Gastrocnemius medialis (tissue), 4 donors: ENCODE measurements at regions of chr1 and their contacts with region 1.

Region 1: DNA sequence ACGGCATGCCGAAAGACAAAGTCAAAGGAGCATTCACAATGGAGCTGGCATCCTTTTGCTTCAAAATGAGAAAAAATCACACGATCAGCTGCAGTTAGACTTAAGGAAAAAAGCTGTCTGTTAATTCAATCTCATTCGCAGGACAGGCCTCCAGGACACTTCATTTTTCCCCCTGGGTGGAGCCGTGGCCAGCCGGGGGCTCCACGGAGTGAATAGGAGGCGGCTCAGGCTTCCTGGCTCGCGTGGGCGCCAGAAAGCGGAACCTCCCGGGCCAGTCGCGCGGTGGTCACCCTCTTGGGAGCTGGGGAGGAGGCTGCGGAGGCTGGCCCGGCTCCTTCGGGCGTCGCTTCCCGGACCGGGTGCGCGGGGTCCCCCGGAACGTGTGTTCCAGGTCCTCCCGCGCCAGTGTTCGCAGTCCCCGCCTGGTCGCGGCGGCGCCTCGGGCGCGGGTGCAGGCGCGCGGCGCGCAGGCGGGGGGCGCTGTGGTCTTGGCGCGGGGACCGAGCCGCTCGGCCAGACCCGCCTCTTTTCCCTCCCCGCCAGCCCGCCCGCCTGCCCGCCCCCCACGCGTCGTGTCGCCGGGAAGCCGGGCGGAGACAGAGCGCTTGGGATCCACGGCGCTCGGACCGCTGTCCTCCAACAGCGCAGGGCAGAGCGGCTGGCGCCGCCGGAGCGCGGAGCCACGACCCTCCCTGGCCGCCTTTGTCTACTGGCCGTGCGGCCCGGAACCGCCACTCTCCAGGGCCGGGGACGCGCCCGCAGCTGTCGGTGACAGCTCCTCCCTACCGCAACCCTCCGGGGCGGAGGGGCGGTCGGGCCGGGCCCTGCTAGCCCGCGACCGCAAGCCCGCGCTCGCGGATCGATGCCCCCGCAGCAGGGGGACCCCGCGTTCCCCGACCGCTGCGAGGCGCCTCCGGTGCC is at the start of gene RHOU:
- DNase-seq: peak; percentile 62 to 65
- ATAC-seq: peak; percentile 81 to 83
- H3K4me3 ChIP-seq: peak within 1 kb of the TSS; percentile 78 to 97 (median 81)
- H3K27ac ChIP-seq: peak within 1 kb of the TSS; percentile 84 to 93 (median 88)
- H3K4me1 ChIP-seq: peaks cover 25 to 35% of the 10 kb centered on the region in 2 donors
- H3K27me3 ChIP-seq: no peaks in the 10 kb centered on the region
- CTCF ChIP-seq: peak in 4 of 5 experiments; percentile 84 to 97 (median 96)
- POLR2A ChIP-seq: peak; percentile 66 to 73
- total RNA-seq, gene RHOU: 11.8 to 65.2 (median 47.4) TPM

Region 2: GRCh38 chr1:228664399-228664914 is 70.7 kb before region 1 on chr1:
- in situ Hi-C with region 1: no loop called
- intact Hi-C with region 1: loop called (anchors 5 kb)
- DNase-seq: peak; percentile 39 to 51
- ATAC-seq: peak in 1 of 2 donors; percentile 55
- H3K4me3 ChIP-seq: no peak overlapping the region
- H3K27ac ChIP-seq: no peak overlapping the region
- H3K4me1 ChIP-seq: no peaks in the 10 kb centered on the region
- H3K27me3 ChIP-seq: peaks cover 0 to 3% (median 0%) of the 10 kb centered on the region in 3 donors
- CTCF ChIP-seq: peak; percentile 72 to 90 (median 80)
- POLR2A ChIP-seq: no peak

Region 3: DNA sequence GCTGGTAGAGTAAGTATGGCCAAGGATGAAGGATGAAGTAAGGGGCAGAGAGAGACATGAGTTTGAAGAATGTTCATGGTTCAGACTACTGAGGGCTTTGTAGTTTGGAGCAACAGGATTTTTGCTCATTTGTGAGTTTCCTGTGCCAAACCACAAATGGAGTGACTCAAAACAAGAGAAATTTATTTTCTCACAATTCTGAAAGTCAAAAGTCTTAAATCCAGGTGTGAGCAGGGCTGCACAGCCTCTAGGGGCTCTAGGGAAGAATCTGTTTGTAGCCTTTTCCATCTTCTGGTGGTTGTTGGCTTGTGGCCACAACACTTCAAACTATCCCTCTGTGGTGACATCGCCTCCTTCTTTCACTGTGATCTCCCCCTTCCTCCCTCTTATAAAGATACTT is 59.0 kb after region 1 on chr1:
- in situ Hi-C with region 1: no loop called
- intact Hi-C with region 1: no loop called
- DNase-seq: no peak
- ATAC-seq: no peak
- H3K4me3 ChIP-seq: no peak overlapping the region
- H3K27ac ChIP-seq: no peak overlapping the region
- H3K4me1 ChIP-seq: peaks cover 6 to 26% of the 10 kb centered on the region in 2 donors
- H3K27me3 ChIP-seq: no peaks in the 10 kb centered on the region
- CTCF ChIP-seq: no peak
- POLR2A ChIP-seq: no peak

Region 4: DNA sequence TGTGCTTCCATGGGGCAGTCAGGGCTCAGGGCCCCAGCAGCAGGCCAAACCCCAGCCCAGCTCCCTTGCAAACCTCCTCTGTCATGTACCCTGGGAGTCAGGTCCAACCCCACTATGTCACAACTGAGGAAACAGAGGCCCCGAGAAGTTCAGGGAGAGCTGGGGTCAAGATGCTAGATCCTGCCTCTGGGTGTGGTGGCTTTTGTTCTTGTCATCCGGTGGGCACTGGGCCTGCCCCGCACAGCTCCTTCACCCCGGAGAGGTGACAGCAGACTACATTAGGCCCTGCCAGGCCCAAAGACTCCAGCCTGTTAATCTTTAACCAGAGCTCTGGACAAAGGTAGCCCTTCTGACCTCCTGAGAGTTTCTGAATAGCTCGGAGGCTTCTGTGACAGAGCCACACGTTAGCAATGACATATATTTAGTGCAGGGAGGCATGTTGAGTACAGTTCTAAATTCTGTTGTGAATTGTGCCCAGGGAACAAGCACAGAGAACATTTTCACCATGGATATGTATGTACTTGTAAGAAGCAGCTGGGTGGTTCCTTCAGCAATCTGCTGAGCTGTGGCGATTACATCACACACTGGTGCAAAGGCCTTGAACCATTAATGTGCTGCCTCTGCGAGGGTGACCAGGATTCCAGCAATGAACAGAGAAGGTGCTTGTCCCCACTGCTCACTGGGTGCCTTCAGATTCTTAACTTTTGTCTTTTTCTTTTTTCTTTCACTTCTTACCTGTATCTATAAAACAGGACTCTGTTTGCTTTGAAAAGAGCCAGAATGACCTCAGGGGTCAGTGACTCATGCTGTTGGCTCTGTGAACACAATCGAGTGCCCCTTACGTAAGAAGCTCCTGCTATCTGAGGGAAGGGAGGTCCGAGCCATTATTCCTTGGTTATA is 102.9 kb after region 1 on chr1:
- in situ Hi-C with region 1: no loop called
- intact Hi-C with region 1: loop called (anchors 10 kb)
- DNase-seq: peak in 1 of 2 donors; percentile 42
- ATAC-seq: peak; percentile 55 to 70
- H3K4me3 ChIP-seq: no peak overlapping the region
- H3K27ac ChIP-seq: peak overlapping the region; percentile 0 to 77 (median 57)
- H3K4me1 ChIP-seq: peaks cover 0 to 31% of the 10 kb centered on the region in 2 donors
- H3K27me3 ChIP-seq: no peaks in the 10 kb centered on the region
- CTCF ChIP-seq: no peak
- POLR2A ChIP-seq: no peak

Region 5: GRCh38 chr1:228860911-228861831 is 126.0 kb after region 1 on chr1:
- in situ Hi-C with region 1: loop called in 1 of 4 experiments (anchors 10 kb)
- intact Hi-C with region 1: no loop called
- DNase-seq: no peak
- ATAC-seq: peak; percentile 83 to 91
- H3K4me3 ChIP-seq: no peak overlapping the region
- H3K27ac ChIP-seq: peak overlapping the region in 1 of 4 donors; percentile 23
- H3K4me1 ChIP-seq: peaks cover 9 to 10% of the 10 kb centered on the region in 2 donors
- H3K27me3 ChIP-seq: no peaks in the 10 kb centered on the region
- CTCF ChIP-seq: no peak
- POLR2A ChIP-seq: no peak

Region 6: DNA sequence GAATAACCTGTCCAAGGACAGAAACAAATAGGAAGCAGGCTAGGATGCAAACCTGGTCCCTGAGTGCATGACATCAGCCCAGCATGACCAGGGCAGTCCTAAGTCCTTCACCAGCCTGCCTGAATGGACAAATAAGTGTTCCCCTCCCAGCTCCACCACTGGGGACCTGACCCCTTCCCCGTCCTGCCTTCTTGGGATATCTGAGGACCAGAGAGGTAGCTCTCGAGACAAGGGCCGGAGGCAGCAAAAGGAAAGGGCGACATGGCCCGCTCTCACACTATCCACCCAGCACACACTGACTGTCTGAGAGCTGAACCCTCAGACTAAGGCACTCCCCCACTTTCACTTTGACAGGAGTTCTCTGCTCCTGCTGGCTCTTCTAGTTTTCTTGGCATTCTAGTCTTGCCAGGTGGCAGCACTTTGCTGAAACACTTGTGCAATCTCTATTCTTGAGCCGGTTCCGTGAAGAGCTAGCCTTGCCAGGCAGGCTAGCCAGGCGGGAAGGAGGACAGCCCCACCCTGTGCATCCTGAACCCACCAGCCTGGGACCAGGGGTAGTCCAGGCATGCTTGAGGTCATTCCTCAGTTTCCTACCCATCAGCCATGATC is 284.6 kb after region 1 on chr1:
- in situ Hi-C with region 1: no loop called
- intact Hi-C with region 1: loop called (anchors 10 kb)
- DNase-seq: peak in 1 of 2 donors; percentile 27
- ATAC-seq: peak; percentile 27 to 46
- H3K4me3 ChIP-seq: no peak overlapping the region
- H3K27ac ChIP-seq: no peak overlapping the region
- H3K4me1 ChIP-seq: peaks cover 9 to 14% of the 10 kb centered on the region in 2 donors
- H3K27me3 ChIP-seq: no peaks in the 10 kb centered on the region
- CTCF ChIP-seq: peak in 1 of 5 experiments; percentile 4
- POLR2A ChIP-seq: no peak

Region 7: GRCh38 chr1:229156872-229157271 is 421.7 kb after region 1 on chr1:
- in situ Hi-C with region 1: no loop called
- intact Hi-C with region 1: loop called (anchors 2 kb)
- DNase-seq: peak in 1 of 2 donors; percentile 19
- ATAC-seq: peak; percentile 81 to 82
- H3K4me3 ChIP-seq: no peak overlapping the region
- H3K27ac ChIP-seq: no peak overlapping the region
- H3K4me1 ChIP-seq: no peaks in the 10 kb centered on the region
- H3K27me3 ChIP-seq: no peaks in the 10 kb centered on the region
- CTCF ChIP-seq: peak; percentile 23 to 66 (median 47)
- POLR2A ChIP-seq: no peak

Region 8: DNA sequence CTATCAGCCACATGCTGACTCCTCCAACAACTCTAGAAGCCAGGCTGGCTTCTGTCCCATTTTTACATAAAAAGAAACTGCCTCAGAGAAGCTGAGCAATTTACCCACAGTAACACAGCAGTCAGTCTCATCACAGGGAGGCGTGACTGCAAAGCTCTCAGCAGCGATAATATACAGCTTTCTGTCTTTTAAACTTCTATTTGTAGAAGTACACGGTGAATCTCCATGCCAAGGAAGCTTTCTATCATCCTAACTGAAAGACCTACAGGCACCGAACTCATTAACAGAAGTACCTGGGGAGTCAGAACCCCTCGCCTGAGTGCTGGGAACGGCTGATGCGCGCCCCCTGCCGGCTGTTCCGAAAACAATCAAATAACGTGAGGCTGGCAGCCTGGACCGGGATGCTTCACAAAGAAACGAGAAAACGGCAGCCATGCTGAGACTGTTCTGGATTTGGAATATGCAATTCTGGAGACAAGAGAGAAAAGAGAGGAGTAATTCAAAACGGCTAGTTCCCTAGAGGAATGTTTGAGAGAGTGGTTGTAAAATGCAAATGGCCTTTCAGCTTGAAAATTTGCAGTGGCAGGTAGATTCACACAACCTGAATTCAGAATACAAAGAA is 492.3 kb after region 1 on chr1:
- in situ Hi-C with region 1: loop called in 3 of 4 experiments (anchors 5 to 25 kb)
- intact Hi-C with region 1: loop called (anchors 1 kb)
- DNase-seq: peak; percentile 62 to 73
- ATAC-seq: peak; percentile 21 to 29
- H3K4me3 ChIP-seq: no peak overlapping the region
- H3K27ac ChIP-seq: peak overlapping the region in 1 of 4 donors; percentile 97
- H3K4me1 ChIP-seq: peaks cover 31 to 53% of the 10 kb centered on the region in 2 donors
- H3K27me3 ChIP-seq: no peaks in the 10 kb centered on the region
- CTCF ChIP-seq: peak; percentile 65 to 89 (median 86)
- POLR2A ChIP-seq: no peak